ENCODE measurements at regions of chr3 and their contacts with region 1.

Region 1: DNA sequence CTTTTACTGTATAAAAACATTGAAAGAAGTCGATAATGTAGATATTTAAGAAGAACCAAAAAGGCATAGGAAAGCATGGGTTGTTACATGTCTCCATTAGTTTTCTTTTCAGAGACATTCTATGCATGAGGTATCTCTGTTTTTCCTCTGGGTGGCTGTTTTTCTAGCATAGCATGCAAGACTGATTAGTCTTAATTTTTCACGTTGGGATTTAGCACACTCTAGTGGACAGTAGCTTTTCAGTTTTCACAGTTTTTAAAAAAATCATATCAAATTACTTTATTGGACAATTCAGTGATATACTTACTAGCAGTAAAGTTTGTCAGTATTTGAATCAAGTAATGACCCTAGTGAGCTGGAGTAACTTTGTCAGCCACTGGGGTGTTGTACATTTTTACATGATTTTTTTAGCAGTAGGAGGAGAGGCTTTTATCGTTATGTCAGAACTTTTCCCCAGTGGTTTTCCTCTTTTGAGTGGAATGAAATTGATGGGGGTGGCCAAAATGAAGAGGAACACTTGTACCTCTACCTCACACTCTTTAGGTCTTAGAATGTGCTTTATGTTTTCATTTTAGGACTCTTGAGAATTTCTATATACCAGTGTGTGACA is 57.2 kb downstream of the SEC22A start:
- DNase-seq: peak; percentile 75
- H3K4me3 ChIP-seq: no peak overlapping the region
- H3K27ac ChIP-seq: no peak overlapping the region
- H3K4me1 ChIP-seq: no peaks in the 10 kb centered on the region
- H3K27me3 ChIP-seq: no peaks in the 10 kb centered on the region
- CTCF ChIP-seq: peak; percentile 41 to 55
- POLR2A ChIP-seq: no peak

Region 2: GRCh38 chr3:122754929-122755328 is 504.0 kb before region 1 on chr3:
- CTCF ChIA-PET with region 1: interaction called, 5 read pairs
- POLR2A ChIA-PET with region 1: no interaction called
- dilution Hi-C with region 1: no loop called
- intact Hi-C with region 1: loop called (anchors 10 kb)
- DNase-seq: peak; percentile 36
- H3K4me3 ChIP-seq: no peak overlapping the region
- H3K27ac ChIP-seq: no peak overlapping the region
- H3K4me1 ChIP-seq: no peaks in the 10 kb centered on the region
- H3K27me3 ChIP-seq: no peaks in the 10 kb centered on the region
- CTCF ChIP-seq: peak; percentile 56 to 68
- POLR2A ChIP-seq: no peak

Region 3: DNA sequence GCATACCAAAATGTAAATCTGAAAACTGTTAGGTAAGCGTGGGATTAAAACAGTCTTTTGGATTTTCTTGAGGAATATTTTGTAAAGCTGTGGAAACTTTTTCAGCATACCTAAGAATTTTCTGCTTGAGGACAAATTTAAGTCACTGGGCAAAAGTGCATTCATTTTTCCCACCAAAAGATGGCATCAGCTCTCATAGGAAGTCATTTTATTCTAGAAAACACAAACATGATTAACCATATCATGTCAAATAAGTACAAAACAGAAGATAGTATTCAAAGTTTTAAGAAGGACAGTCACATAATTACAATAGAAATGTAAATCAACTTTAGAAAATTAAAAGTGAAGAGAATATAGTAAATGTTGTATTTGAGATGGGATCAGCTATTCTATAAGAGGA is 400.5 kb before region 1 on chr3:
- CTCF ChIA-PET with region 1: no interaction called
- POLR2A ChIA-PET with region 1: no interaction called
- dilution Hi-C with region 1: no loop called
- intact Hi-C with region 1: loop called (anchors 1 kb)
- DNase-seq: peak; percentile 45
- H3K4me3 ChIP-seq: no peak overlapping the region
- H3K27ac ChIP-seq: no peak overlapping the region
- H3K4me1 ChIP-seq: no peaks in the 10 kb centered on the region
- H3K27me3 ChIP-seq: no peaks in the 10 kb centered on the region
- CTCF ChIP-seq: peak in 1 of 2 donors; percentile 15
- POLR2A ChIP-seq: no peak

Region 4: GRCh38 chr3:122942937-122943827 is 315.7 kb before region 1 on chr3:
- CTCF ChIA-PET with region 1: interaction called, 9 read pairs
- POLR2A ChIA-PET with region 1: no interaction called
- dilution Hi-C with region 1: no loop called
- intact Hi-C with region 1: loop called (anchors 1 kb)
- DNase-seq: peak; percentile 17
- H3K4me3 ChIP-seq: no peak overlapping the region
- H3K27ac ChIP-seq: no peak overlapping the region
- H3K4me1 ChIP-seq: peaks cover 11% of the 10 kb centered on the region
- H3K27me3 ChIP-seq: peaks cover 2 to 4% of the 10 kb centered on the region in 2 experiments
- CTCF ChIP-seq: peak; percentile 85 to 91
- POLR2A ChIP-seq: no peak

Region 5: DNA sequence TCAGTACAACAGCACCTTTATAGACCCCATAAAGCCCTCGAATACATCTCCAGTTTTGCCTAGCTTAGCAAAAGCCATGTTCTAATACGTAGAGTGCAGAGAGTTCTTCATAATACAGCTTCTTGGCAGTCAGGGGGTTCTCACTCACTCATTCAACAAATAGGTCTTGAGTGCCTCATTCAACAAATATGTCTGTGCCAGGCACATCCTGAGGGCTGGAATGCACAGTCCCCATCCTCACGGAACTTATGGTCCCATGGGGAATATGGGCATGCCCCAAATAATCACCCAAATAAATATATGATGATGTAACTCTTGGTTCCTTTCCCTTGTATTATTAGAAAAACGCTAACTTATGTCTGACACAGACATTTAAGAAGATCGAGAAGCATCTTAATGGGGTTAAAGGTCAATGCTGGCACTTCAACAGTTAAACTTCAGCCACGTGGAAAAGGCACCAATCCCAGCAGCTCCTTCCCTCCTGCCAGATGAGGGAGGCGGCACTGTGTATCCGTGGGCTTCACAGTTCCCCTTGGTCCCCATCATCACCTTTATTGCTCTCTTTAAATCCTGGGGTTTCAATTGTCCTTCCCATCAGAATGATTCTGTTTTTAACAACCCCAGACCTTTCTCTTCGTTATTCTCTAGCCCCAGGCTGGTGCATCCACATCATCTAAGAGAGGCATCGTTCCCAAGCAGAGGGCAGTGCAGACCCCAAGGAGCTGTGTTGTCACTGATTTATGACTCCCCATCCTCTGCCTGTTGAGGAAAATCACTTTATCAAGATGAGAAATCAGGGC is 212.5 kb before region 1 on chr3:
- CTCF ChIA-PET with region 1: interaction called, 8 read pairs
- POLR2A ChIA-PET with region 1: no interaction called
- dilution Hi-C with region 1: no loop called
- intact Hi-C with region 1: loop called (anchors 5 kb)
- DNase-seq: no peak
- H3K4me3 ChIP-seq: no peak overlapping the region
- H3K27ac ChIP-seq: no peak overlapping the region
- H3K4me1 ChIP-seq: peaks cover 3% of the 10 kb centered on the region
- H3K27me3 ChIP-seq: peaks cover 5 to 12% of the 10 kb centered on the region in 2 experiments
- CTCF ChIP-seq: no peak
- POLR2A ChIP-seq: no peak

Region 6: GRCh38 chr3:123688241-123688747 is 429.4 kb after region 1 on chr3:
- CTCF ChIA-PET with region 1: no interaction called
- POLR2A ChIA-PET with region 1: no interaction called
- dilution Hi-C with region 1: no loop called
- intact Hi-C with region 1: no loop called
- DNase-seq: peak; percentile 82
- H3K4me3 ChIP-seq: no peak overlapping the region
- H3K27ac ChIP-seq: peak overlapping the region; percentile 77
- H3K4me1 ChIP-seq: peaks cover 39% of the 10 kb centered on the region
- H3K27me3 ChIP-seq: no peaks in the 10 kb centered on the region
- CTCF ChIP-seq: no peak
- POLR2A ChIP-seq: no peak